BJ (cell line): ENCODE measurements at regions of chr22 and their contacts with region 1.

Region 1: DNA sequence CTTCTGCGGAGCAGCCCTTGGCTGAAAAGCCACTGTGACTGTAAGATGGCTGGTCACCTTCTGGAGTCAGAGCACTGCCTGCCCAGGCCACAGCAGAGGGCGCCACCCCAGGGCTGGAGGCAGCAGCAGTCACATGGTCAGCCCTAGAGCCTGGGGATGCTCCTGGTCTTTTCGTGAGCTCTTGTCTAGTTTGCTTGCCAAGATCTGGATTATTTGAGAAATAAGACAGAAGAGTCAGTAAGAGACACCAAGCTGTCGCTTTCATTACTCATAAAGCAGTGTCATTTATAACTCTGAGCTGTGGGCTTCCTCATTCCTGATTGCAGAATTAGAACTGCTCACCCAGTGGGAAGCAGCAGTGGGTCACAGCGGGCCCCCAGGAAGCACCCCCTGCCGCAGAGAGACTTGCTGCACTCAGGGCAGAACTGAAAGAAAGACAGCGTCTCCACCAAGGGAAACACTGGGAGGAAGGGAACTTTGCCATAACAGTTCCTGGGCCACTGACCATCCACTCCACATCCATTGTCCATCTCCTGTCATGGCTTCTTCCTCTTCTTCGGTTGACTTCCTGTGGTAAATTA is 56.7 kb downstream of the PPP6R2 start:
- DNase-seq: peak; percentile 1
- H3K4me3 ChIP-seq: no peak overlapping the region
- H3K27me3 ChIP-seq: no peaks in the 10 kb centered on the region
- CTCF ChIP-seq: peak; percentile 62

Region 2: GRCh38 chr22:50417411-50418210 is 17.8 kb after region 1 on chr22:
- CTCF ChIA-PET with region 1: no interaction called
- POLR2A ChIA-PET with region 1: no interaction called
- DNase-seq: no peak
- H3K4me3 ChIP-seq: no peak overlapping the region
- H3K27me3 ChIP-seq: no peaks in the 10 kb centered on the region
- CTCF ChIP-seq: no peak

Region 3: DNA sequence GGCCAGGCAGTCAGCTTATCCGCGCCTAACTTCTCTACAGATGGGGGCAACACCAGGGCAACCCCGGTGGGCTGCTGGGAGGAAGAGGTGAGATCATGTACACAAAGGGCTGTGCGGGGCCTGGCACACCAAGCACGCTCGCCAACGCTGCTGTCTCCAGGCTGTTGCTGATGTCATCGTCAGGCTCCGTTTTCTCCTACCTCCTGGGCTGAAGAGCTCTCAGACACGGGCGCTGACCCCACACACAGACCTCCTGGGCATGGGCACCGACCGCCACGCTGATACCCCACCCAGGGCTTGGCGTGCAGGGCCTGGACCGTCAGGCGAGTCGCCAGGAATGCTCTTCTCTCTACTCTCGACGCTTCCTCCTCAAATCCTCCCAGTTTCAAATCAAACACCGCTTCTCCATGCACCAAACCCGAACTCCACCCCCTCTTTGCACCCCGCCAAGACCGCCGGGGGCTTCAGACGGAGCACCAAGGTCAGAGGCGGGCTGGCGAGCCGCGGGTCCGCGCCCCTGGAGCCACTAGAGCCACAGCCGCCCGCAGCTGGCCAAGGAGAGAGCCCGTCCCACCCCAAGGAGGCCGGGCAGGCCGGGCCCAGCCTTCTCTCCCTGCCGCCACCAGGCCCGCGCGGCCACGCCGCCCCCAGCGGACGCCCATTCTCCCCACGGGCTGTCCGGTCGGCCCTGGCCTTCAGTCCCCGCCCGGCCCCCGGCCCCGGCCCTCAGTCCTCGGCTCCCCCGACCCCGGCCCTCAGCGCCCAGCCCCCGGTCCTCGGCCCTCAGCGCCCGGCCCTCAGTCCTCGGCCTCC is 74.2 kb after region 1 on chr22:
- CTCF ChIA-PET with region 1: no interaction called
- POLR2A ChIA-PET with region 1: interaction called, 13 read pairs
- DNase-seq: no peak
- H3K4me3 ChIP-seq: peak overlapping the region; percentile 64
- H3K27me3 ChIP-seq: no peaks in the 10 kb centered on the region; the same call in 1 of the 2 replicates
- CTCF ChIP-seq: no peak

Region 4: DNA sequence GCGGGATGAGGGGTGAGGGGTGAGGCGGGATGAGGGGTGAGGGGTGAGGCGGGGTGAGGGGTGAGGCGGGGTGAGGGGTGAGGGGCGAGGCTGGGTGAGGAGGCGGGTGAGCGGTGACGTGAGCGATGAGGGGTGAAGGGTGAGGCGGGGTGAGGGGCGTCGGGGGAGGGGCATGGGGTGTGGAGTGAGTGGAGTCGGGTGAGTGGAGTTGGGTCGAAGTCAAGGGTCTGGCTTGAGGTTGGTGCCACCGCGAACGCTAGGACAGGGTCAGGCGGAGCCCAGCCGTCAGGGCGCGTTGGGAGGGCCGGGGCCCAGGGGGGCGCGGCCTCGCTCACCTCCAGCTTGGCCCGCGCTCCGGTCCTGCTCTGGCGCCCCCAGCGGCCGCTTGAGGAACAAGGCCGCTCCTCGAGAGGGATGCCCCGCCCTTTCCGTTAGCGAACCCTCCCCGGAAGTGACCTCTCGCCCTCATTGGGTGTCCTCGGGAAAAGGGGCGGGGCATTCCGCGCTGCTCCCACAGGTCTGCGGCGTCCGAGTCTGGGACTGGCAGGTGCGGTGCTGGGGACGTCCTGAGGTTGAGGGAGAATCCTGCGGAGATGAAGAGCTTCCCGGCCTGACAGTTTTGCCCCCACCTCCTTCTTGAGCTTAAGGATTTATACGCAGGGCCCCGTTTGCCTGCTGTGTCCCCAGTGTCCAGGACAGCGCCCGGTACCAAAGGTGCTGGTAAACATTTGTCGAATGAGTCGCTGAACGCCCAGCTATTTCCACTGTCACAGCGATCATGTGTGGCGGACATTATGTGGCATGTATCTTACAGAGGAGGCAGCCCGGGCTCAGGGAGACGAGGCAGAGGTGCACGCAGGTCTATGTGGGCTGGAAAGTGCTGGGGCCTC is 162.9 kb after region 1 on chr22 and contains the start of gene SYCE3:
- CTCF ChIA-PET with region 1: no interaction called
- POLR2A ChIA-PET with region 1: no interaction called
- DNase-seq: peak; percentile 30
- H3K4me3 ChIP-seq: peak within 1 kb of the TSS; percentile 52
- H3K27me3 ChIP-seq: peaks cover 7% of the 10 kb centered on the region; the same call in 1 of the 2 replicates
- CTCF ChIP-seq: peak; percentile 84
- polyA plus RNA-seq, gene SYCE3: not detected in 2 replicates